ENCODE measurements at regions of chr19 and their contacts with region 1.

Region 1: DNA sequence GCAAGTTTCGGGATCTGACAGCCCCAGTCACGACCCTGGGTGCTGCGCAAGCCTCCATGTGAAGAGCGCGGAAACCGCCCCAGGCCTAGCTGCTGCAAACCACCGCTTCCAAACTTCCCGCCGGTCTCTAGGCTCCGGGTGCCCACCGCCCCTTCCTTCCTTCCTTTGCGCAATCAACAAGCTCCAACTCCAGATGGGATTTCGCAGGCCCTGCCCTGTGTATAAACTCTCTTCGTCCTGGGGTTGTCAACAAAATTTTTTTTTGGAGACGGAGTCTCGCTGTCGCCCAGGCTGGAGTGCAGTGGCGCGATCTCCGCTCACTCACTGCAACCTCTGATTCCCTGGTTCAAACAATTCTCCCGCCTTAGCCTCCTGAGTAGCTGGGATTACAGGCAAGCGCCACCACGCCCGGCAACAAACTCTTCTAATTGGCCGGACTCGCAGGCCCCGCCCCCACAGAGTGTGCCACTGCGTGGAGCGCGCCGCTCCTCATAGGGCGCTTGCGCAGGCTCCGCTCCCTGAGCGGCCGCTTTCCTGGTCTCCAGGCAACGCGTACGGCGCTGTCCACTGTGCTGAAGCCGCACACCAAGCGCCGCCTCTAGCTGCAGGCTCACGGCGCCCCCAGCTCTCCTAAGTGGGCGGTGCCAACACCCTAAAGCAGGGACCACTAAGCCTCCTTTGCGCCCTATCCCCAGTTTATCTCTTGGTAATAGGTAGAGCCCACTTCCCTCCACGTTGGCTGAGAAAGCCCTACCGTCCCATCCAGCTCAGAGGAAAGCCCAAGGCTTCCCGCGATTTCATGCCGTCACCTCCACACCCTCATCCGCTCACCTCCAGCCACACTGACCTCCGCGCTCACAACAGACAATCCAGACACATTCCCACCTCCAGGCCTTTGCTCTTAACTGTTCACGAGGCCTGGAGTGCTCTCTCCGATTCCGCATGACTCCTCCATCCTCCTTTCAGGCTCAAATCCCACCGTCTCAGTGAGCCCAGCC is 5.5 kb upstream of the QTRT1 start:
- DNase-seq: peak; percentile 99
- H3K4me3 ChIP-seq: peak overlapping the region; percentile 31
- H3K27ac ChIP-seq: peak overlapping the region; percentile 62
- H3K4me1 ChIP-seq: peaks cover 10% of the 10 kb centered on the region
- H3K27me3 ChIP-seq: no peaks in the 10 kb centered on the region
- CTCF ChIP-seq: no peak

Region 2: GRCh38 chr19:10478903-10479384 is 216.8 kb before region 1 on chr19:
- CTCF ChIA-PET with region 1: interaction called, 9 read pairs
- POLR2A ChIA-PET with region 1: no interaction called
- intact Hi-C with region 1: loop called (anchors 5 kb)
- DNase-seq: peak; percentile 96
- H3K4me3 ChIP-seq: no peak overlapping the region
- H3K27ac ChIP-seq: no peak overlapping the region
- H3K4me1 ChIP-seq: peaks cover 11% of the 10 kb centered on the region
- H3K27me3 ChIP-seq: no peaks in the 10 kb centered on the region
- CTCF ChIP-seq: peak; percentile 67

Region 3: DNA sequence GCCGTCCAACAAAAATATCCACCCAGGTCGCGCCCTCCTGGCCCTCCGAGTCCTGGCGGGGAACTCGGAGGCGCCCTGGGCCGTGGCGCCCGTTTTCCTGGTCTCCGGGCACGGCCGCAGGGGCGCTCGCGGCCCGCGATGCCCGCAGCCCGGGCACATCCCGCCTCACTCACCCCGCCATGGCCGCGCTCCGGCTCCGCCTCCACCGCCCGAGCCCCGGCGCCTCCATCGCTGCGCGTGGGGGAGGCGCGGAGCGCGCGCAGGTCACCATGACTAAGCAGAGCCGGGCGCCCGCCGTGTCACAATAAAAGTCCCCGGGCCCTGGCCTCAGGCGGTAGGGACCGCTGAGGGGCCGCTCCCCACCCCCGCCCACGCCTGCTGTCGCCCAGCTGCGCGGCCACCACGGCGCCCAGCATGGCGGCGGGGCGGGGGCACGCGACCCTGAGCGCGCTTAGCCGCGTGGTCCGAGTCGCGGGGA is 193.1 kb before region 1 on chr19:
- CTCF ChIA-PET with region 1: no interaction called
- POLR2A ChIA-PET with region 1: no interaction called
- intact Hi-C with region 1: loop called (anchors 5 kb)
- DNase-seq: peak; percentile 95
- H3K4me3 ChIP-seq: peak overlapping the region; percentile 90
- H3K27ac ChIP-seq: peak overlapping the region; percentile 99
- H3K4me1 ChIP-seq: no peaks in the 10 kb centered on the region
- H3K27me3 ChIP-seq: no peaks in the 10 kb centered on the region
- CTCF ChIP-seq: no peak

Region 4: DNA sequence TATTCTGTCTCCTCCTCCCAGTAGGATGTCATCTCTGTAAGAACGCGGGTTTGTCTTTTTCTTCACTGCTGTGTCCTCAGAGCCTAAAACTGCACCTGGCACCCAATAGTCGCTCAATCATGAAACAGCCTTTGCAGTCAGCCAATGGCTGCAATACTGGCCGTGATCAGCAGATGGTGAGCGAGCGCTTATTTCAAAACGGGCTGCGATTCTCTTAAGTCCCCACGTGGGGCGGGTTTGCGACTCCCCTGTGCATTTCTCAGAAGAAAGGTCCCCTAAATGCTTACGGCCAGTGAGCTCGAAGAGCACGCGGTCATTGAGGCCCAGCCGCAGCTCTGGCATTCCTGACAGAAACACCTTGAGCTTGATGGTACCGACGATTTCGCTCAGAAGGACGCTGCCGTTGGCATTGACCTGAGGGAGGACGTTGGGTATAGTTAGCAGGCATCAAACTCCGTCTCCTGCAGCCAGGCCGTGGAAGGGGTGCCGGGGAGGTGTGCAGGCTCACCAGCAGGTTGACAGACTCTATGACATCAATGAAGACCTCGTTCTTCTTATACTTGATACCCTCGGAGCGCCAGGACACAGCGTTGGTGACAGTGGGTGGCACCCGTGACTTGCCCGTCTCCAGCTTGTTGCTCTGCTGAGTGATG is 114.6 kb before region 1 on chr19:
- CTCF ChIA-PET with region 1: interaction called, 42 read pairs
- POLR2A ChIA-PET with region 1: no interaction called
- intact Hi-C with region 1: loop called (anchors 2 kb)
- DNase-seq: peak; percentile 95
- H3K4me3 ChIP-seq: no peak overlapping the region
- H3K27ac ChIP-seq: no peak overlapping the region
- H3K4me1 ChIP-seq: no peaks in the 10 kb centered on the region
- H3K27me3 ChIP-seq: no peaks in the 10 kb centered on the region
- CTCF ChIP-seq: peak; percentile 99

Region 5: GRCh38 chr19:10593820-10594637 is 101.7 kb before region 1 on chr19:
- CTCF ChIA-PET with region 1: interaction called, 16 read pairs
- POLR2A ChIA-PET with region 1: no interaction called
- intact Hi-C with region 1: no loop called
- DNase-seq: no peak
- H3K4me3 ChIP-seq: no peak overlapping the region
- H3K27ac ChIP-seq: no peak overlapping the region
- H3K4me1 ChIP-seq: no peaks in the 10 kb centered on the region
- H3K27me3 ChIP-seq: no peaks in the 10 kb centered on the region
- CTCF ChIP-seq: no peak

Measured in A673 (cell line).